ENCODE measurements at regions of chr3 and their contacts with region 1.

Region 1: DNA sequence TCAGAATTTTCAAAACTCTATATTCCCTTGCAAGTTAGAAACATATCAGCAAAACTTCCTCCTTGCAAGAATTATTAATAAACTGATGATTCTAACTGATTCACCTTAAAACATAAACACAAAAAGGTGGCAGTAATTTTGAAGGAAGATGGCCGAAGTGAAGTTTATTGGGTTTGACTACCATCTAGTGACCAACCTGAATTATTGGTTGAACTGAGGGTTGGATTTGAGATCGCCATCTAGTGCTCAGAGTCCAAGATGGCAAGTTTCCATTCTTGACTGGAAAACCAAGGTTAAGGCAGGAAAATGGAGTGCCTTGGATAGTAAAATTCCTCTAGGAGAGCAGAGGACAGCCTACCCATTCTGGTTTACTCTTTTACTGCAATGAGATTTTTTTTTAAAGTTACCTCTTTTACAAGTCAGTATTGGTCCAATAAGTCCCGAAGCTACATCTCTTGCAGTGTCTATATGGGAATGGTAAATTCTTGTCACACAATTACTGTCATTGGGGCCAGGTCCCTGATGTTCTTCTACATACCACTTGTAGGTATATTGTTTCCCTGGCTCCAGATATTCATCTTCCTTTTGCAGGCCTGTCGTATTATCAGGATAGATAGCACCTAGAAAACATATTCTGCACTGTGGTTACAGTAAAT is 51.6 kb upstream of the CP start:
- DNase-seq: peak in 2 of 6 donors; percentile 46 to 70
- ATAC-seq: peak; percentile 86 to 94 (median 92)
- H3K4me3 ChIP-seq: no peak overlapping the region
- H3K27ac ChIP-seq: no peak overlapping the region
- H3K4me1 ChIP-seq: peaks cover 8 to 14% (median 14%) of the 10 kb centered on the region in 3 donors
- H3K27me3 ChIP-seq: no peaks in the 10 kb centered on the region
- CTCF ChIP-seq: peak; percentile 63 to 82 (median 80)

Region 2: DNA sequence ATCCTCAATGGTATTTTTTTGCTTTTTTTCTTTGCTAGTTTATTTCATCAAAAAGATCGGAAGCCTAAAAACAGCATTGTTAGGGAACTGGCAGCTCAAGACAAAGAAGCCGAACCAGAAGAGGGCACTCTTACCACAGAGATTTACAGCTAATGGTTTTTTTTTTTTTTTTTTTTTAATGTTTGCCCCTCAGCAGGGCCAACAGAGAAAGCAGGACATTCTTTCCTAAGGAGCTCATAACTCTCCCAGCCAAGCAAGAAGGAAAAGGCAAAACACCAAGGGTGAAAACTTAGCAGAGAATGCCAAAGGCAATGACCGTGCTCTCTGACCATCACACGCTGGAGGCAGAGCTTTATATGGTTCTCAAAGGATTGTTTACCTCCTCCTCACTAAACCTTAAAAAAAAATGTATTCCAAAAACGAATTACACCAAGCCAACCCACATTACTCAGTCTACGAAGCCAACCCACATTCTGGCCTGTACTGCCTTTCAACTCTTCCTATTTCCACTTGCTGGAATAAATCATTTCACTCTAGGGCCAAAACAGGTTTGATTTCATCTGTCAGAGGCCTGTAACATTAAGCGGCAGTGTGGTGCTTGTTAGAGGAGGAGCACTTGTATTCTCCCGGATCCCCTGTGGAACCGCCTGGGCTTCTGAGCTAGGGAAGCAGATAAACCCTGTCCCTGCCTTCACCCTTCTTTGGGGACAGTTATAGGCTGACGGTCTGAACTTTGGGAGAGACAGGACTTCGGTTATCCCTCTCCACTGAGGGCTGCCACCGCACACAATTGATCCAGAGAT is 317.5 kb before region 1 on chr3:
- intact Hi-C with region 1: loop called in 2 of 3 experiments (anchors 5 to 10 kb)
- DNase-seq: peak in 3 of 6 donors; percentile 43 to 59 (median 52)
- ATAC-seq: peak; percentile 60 to 87 (median 82)
- H3K4me3 ChIP-seq: no peak overlapping the region
- H3K27ac ChIP-seq: no peak overlapping the region
- H3K4me1 ChIP-seq: peaks cover 0 to 6% (median 0%) of the 10 kb centered on the region in 3 donors
- H3K27me3 ChIP-seq: no peaks in the 10 kb centered on the region
- CTCF ChIP-seq: peak in 2 of 4 donors; percentile 26 to 31

Region 3: DNA sequence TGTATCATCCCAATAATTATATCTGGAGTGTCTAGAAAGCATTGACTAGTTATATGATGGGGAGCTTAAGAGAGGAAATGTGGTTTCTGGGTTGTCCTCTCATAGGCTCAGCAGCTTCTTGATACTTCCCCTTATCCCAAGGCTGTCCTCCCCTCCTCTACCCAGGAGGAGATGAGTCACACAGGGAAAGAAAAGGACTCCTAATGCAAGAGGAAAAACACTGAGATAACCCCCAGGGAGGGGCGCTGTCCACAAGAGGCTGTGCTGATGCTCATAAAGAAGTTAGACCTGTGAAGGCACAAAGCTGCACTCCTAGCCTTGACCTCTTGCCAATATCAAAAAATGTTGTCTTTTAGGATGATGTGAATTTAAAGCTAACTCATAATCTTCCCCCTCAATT is 310.7 kb before region 1 on chr3:
- intact Hi-C with region 1: loop called in 2 of 3 experiments (anchors 5 to 10 kb)
- DNase-seq: no peak
- ATAC-seq: peak in 2 of 4 donors; percentile 39 to 45
- H3K4me3 ChIP-seq: no peak overlapping the region
- H3K27ac ChIP-seq: no peak overlapping the region
- H3K4me1 ChIP-seq: peaks cover 0 to 4% (median 0%) of the 10 kb centered on the region in 3 donors
- H3K27me3 ChIP-seq: no peaks in the 10 kb centered on the region
- CTCF ChIP-seq: no peak

Region 4: DNA sequence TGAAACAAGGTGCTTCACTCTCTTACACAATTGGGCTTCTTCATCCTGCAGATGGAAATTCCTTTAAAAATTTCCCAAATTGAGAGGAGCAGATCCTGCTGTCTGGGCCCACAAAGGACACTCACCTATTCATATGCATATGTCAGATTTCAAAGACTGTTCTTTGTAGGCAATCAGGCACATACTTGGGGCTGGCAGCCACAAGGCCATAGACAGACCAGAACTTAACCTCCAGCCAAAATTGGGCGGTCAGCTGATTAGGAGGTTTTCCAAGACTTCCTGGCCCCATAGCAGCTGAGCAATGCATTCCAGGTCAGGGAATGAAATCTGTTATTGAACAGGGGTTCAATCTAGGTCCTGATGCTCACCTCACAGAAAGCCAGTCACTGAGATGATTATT is 158.8 kb before region 1 on chr3:
- intact Hi-C with region 1: loop called in 2 of 3 experiments (anchors 2 to 5 kb)
- DNase-seq: no peak
- ATAC-seq: no peak
- H3K4me3 ChIP-seq: no peak overlapping the region
- H3K27ac ChIP-seq: no peak overlapping the region
- H3K4me1 ChIP-seq: no peaks in the 10 kb centered on the region
- H3K27me3 ChIP-seq: no peaks in the 10 kb centered on the region
- CTCF ChIP-seq: no peak

Measured in pancreas (tissue), 10 donors.